ENCODE measurements at regions of chr1 and their contacts with region 1.

Region 1: DNA sequence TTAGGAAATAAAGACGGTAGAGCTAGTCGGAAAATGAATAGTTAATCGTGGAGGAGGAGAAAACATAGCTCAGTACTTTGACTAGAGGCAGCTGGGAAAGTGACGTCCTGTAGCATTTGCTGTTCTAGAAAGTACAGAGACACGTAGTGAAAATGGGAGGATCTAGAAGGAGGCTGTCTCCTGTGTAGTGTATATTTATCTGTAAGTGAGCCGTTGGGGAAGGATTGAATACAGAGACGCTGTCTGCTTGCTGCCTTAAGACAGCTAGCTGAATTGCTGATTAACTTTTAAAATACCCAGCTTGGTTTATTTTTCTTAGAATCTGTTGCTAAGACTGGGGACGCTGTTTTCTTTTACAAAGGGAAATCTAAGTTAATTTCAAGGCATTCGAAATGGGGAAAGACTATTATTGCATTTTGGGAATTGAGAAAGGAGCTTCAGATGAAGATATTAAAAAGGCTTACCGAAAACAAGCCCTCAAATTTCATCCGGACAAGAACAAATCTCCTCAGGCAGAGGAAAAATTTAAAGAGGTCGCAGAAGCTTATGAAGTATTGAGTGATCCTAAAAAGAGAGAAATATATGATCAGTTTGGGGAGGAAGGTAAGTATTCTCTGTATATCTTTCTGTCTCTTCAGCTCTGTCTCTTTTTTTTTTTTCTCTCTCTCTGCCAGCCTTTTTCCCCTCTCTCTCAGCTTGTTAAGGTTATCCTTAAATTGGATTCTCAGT is at the start of gene DNAJB4:
- DNase-seq: peak; percentile 98
- H3K4me3 ChIP-seq: peak within 1 kb of the TSS; percentile 69 to 99 (median 98)
- H3K27ac ChIP-seq: peak within 1 kb of the TSS; percentile 82
- H3K4me1 ChIP-seq: peaks cover 29% of the 10 kb centered on the region
- H3K27me3 ChIP-seq: no peaks in the 10 kb centered on the region
- CTCF ChIP-seq: no peak
- POLR2A ChIP-seq: peak; percentile 94
- total RNA-seq, gene DNAJB4: 122 and 136 TPM in 2 replicates

Region 2: DNA sequence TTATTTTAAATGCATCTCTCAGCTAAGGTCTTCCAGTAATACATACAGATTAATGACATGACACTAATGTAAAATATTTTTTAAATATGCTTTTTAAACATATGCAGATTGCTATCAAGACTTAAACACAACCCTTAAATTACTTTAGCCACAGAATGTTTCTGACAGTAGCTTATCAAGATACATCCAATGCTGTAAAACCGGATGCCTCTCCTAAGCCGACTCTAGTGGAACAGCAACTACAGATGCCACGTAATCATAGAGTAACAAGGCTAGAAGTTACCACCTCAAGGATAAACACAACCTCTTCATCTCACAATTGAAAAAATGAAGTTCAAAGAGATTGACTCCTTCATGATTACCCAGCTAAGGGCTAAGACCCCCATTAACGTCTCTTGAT is 390.8 kb before region 1 on chr1:
- CTCF ChIA-PET with region 1: no interaction called
- POLR2A ChIA-PET with region 1: no interaction called
- dilution Hi-C with region 1: no loop called
- intact Hi-C with region 1: no loop called
- DNase-seq: no peak
- H3K4me3 ChIP-seq: no peak overlapping the region
- H3K27ac ChIP-seq: no peak overlapping the region
- H3K4me1 ChIP-seq: no peaks in the 10 kb centered on the region
- H3K27me3 ChIP-seq: no peaks in the 10 kb centered on the region
- CTCF ChIP-seq: no peak
- POLR2A ChIP-seq: no peak

Region 3: DNA sequence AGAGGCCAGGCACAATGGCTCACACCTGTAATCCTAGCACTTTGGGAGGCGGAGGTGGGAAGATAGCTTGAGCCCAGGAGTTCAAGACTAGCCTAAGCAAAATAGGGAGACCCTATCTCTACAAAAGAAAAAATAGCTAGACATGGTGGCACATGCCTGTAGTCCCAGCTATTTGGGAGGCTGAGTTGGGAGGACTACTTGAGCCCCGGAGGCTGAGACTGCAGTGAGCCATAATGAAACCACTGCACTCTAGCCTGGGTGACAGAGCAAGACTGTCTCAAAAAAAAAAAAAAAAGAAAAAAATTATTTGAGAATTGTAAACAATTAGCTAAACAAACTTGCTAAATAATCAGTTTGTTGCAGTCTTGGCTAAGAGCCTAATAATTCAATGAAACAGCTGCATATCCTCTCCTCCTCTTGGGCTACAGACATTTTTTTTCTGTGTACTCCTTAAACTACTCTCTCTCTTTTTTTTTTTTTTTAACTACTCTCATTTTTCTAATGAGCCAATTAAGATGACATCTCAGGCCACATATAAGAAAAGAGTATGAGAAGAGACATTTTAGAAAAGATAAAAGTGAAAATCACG is 10.7 kb before region 1 on chr1:
- CTCF ChIA-PET with region 1: interaction called, 6 read pairs
- POLR2A ChIA-PET with region 1: interaction called, 22 read pairs
- dilution Hi-C with region 1: no loop called
- intact Hi-C with region 1: no loop called
- DNase-seq: no peak
- H3K4me3 ChIP-seq: no peak overlapping the region
- H3K27ac ChIP-seq: no peak overlapping the region
- H3K4me1 ChIP-seq: no peaks in the 10 kb centered on the region
- H3K27me3 ChIP-seq: no peaks in the 10 kb centered on the region
- CTCF ChIP-seq: no peak
- POLR2A ChIP-seq: no peak

Region 4: DNA sequence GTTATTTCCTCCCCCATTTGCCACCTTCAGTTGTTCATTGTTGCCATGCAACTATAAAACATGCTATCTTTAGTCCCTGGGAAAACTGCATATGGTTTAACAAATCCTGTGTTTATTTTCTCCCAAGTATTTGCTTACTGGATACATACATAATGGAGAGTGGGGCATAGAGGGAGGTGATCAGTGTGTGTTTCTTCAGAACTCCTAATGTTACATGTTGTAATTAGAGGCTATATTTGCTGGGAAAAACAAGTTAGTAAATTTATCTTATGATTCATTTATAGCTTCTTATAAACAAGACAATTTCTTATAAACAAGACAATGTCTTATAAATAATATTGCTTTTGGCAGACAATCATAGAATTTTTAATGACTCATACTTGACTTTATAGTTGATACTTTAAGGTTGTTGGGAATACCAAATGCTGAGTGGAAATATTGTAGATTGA is 33.6 kb after region 1 on chr1:
- CTCF ChIA-PET with region 1: interaction called, 5 read pairs
- POLR2A ChIA-PET with region 1: interaction called, 12 read pairs
- dilution Hi-C with region 1: no loop called
- intact Hi-C with region 1: loop called (anchors 1 kb)
- DNase-seq: peak; percentile 91
- H3K4me3 ChIP-seq: no peak overlapping the region
- H3K27ac ChIP-seq: peak overlapping the region; percentile 59
- H3K4me1 ChIP-seq: peaks cover 16% of the 10 kb centered on the region
- H3K27me3 ChIP-seq: no peaks in the 10 kb centered on the region
- CTCF ChIP-seq: no peak
- POLR2A ChIP-seq: no peak

Region 5: DNA sequence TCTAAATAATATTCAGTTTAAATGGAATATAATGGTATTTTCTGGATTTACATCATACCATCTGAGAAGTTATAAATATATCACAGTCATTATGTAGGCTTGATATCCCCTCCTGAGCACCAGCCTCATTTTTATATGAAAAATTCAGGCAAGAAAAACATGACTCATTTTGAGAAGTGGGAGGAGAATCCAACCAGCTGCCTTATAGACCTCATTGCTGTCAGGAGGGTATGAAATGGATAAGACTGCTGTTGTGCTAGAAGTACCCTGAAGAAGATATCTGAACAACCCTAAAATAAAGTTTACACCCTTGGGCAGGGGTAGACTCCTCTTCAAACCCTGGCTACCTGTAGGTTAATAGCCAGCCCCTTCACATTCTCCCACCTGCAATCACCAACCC is 49.7 kb after region 1 on chr1:
- CTCF ChIA-PET with region 1: no interaction called
- POLR2A ChIA-PET with region 1: interaction called, 16 read pairs
- dilution Hi-C with region 1: no loop called
- intact Hi-C with region 1: no loop called
- DNase-seq: peak; percentile 52
- H3K4me3 ChIP-seq: no peak overlapping the region
- H3K27ac ChIP-seq: no peak overlapping the region
- H3K4me1 ChIP-seq: peaks cover 25% of the 10 kb centered on the region
- H3K27me3 ChIP-seq: no peaks in the 10 kb centered on the region
- CTCF ChIP-seq: no peak
- POLR2A ChIP-seq: no peak

Region 6: GRCh38 chr1:78081980-78082860 is 77.3 kb after region 1 on chr1:
- CTCF ChIA-PET with region 1: interaction called, 11 read pairs
- POLR2A ChIA-PET with region 1: interaction called, 29 read pairs
- dilution Hi-C with region 1: no loop called
- intact Hi-C with region 1: loop called (anchors 1 kb)
- DNase-seq: peak; percentile 53
- H3K4me3 ChIP-seq: no peak overlapping the region
- H3K27ac ChIP-seq: no peak overlapping the region
- H3K4me1 ChIP-seq: peaks cover 39% of the 10 kb centered on the region
- H3K27me3 ChIP-seq: no peaks in the 10 kb centered on the region
- CTCF ChIP-seq: no peak
- POLR2A ChIP-seq: no peak

Region 7: GRCh38 chr1:78101514-78101913 is 96.6 kb after region 1 on chr1:
- CTCF ChIA-PET with region 1: interaction called, 16 read pairs
- POLR2A ChIA-PET with region 1: interaction called, 43 read pairs
- dilution Hi-C with region 1: no loop called
- intact Hi-C with region 1: loop called (anchors 1 kb)
- DNase-seq: peak; percentile 99
- H3K4me3 ChIP-seq: no peak overlapping the region
- H3K27ac ChIP-seq: peak overlapping the region; percentile 98
- H3K4me1 ChIP-seq: peaks cover 52% of the 10 kb centered on the region
- H3K27me3 ChIP-seq: no peaks in the 10 kb centered on the region
- CTCF ChIP-seq: no peak
- POLR2A ChIP-seq: peak; percentile 60